Sigmoid colon (tissue), 7 donors: ENCODE measurements at regions of chr15 and their contacts with region 1.

Region 1: GRCh38 chr15:73972984-73973682 is 19.0 kb downstream of the STOML1 start:
- DNase-seq: peak; percentile 92
- H3K4me3 ChIP-seq: peak overlapping the region in 3 of 4 donors; percentile 21 to 32 (median 24)
- H3K27ac ChIP-seq: no peak overlapping the region
- H3K4me1 ChIP-seq: peaks cover 0 to 11% (median 10%) of the 10 kb centered on the region in 4 donors
- H3K27me3 ChIP-seq: no peaks in the 10 kb centered on the region
- CTCF ChIP-seq: peak; percentile 85 to 88 (median 88)
- EP300 ChIP-seq: no peak
- POLR2A ChIP-seq: no peak

Region 2: DNA sequence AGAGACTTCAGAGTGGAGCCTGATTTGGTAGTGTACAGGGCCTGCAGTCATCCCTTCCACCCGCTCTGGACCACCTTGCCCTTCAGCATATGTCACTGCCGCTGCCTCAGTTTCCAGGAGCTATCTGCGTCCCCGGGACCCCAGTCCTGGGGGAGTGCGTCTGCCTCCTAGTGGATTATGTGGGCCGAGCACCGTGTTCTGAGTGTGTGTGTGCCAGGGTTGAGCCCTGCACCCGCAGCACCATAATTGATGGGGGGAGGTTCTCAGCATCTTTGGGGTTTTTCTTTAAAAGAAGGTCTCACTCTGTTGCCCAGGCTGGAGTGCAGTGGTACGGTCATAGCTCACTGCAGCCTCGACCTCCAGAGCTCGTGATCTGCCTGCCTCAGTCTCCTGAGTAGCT is 255.3 kb before region 1 on chr15:
- intact Hi-C with region 1: no loop called
- DNase-seq: no peak
- H3K4me3 ChIP-seq: no peak overlapping the region
- H3K27ac ChIP-seq: no peak overlapping the region
- H3K4me1 ChIP-seq: no peaks in the 10 kb centered on the region
- H3K27me3 ChIP-seq: no peaks in the 10 kb centered on the region
- CTCF ChIP-seq: no peak
- EP300 ChIP-seq: no peak
- POLR2A ChIP-seq: no peak

Region 3: DNA sequence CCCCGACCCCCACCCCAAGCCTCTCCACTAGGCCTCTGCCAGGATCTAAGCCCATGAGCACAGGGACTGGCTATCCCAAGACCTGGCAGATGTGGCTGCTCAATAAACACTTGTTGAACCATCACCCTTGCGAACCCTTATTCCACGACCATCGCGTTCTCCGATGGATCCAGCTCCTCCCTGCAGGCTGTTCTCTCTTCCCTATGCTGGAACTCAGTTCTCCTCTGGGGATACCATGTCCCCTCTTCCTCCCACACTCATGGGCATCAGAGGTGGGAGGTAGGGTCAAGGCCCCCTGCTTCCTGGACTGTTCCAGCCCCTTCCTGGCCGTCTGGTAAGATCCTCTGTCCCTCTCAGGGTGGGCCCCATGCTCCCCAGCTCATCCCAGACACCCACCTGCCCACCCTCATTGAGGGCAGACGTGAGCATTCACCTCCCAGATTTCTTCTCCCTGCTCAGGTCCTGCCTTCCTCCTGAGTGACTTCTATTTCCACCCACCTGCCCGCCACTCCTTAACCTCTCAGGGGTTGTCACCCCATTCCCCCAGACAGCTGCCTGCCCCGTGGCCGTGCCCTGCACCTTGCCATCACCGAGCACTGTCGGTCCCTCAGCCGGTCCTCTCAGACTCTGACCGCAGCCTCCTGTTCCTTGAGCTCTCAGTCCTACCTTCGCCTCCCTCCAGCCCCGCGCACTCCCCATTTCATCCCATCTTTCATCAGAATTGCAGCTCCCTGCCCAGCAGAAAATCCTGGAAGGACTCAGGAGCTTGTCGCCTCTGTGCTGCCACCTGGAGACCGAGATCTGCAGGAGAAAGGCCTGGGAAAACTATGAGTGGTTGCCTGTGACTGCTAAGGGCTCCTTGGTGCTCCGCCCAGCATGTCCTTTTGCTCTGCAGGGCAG is 63.4 kb after region 1 on chr15:
- intact Hi-C with region 1: loop called (anchors 1 kb)
- DNase-seq: peak; percentile 87
- H3K4me3 ChIP-seq: no peak overlapping the region
- H3K27ac ChIP-seq: no peak overlapping the region
- H3K4me1 ChIP-seq: peaks cover 0 to 42% (median 34%) of the 10 kb centered on the region in 4 donors
- H3K27me3 ChIP-seq: no peaks in the 10 kb centered on the region
- CTCF ChIP-seq: peak; percentile 54 to 62 (median 58)
- EP300 ChIP-seq: no peak
- POLR2A ChIP-seq: no peak

Region 4: DNA sequence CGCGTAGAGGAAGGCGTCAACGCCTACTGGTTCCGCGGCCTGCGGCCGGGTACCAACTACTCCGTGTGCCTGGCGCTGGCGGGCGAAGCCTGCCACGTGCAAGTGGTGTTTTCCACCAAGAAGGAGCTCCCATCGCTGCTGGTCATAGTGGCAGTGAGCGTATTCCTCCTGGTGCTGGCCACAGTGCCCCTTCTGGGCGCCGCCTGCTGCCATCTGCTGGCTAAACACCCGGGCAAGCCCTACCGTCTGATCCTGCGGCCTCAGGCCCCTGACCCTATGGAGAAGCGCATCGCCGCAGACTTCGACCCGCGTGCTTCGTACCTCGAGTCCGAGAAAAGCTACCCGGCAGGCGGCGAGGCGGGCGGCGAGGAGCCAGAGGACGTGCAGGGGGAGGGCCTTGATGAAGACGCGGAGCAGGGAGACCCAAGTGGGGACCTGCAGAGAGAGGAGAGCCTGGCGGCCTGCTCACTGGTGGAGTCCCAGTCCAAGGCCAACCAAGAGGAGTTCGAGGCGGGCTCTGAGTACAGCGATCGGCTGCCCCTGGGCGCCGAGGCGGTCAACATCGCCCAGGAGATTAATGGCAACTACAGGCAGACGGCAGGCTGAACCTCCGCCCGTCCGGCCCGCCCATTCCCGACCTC is 161.4 kb after region 1 on chr15:
- intact Hi-C with region 1: loop called (anchors 10 kb)
- DNase-seq: peak; percentile 73
- H3K4me3 ChIP-seq: no peak overlapping the region
- H3K27ac ChIP-seq: no peak overlapping the region
- H3K4me1 ChIP-seq: peaks cover 0 to 64% (median 52%) of the 10 kb centered on the region in 4 donors
- H3K27me3 ChIP-seq: peaks cover 62 to 100% (median 91%) of the 10 kb centered on the region in 3 donors
- CTCF ChIP-seq: peak in 3 of 4 experiments; percentile 11 to 41 (median 35)
- EP300 ChIP-seq: no peak
- POLR2A ChIP-seq: no peak

Region 5: GRCh38 chr15:74322181-74323076 is 349.3 kb after region 1 on chr15:
- intact Hi-C with region 1: loop called (anchors 5 kb)
- DNase-seq: peak; percentile 82
- H3K4me3 ChIP-seq: no peak overlapping the region
- H3K27ac ChIP-seq: no peak overlapping the region
- H3K4me1 ChIP-seq: peaks cover 0 to 23% (median 5%) of the 10 kb centered on the region in 4 donors
- H3K27me3 ChIP-seq: no peaks in the 10 kb centered on the region
- CTCF ChIP-seq: peak; percentile 54 to 77 (median 61)
- EP300 ChIP-seq: no peak
- POLR2A ChIP-seq: no peak

Region 6: DNA sequence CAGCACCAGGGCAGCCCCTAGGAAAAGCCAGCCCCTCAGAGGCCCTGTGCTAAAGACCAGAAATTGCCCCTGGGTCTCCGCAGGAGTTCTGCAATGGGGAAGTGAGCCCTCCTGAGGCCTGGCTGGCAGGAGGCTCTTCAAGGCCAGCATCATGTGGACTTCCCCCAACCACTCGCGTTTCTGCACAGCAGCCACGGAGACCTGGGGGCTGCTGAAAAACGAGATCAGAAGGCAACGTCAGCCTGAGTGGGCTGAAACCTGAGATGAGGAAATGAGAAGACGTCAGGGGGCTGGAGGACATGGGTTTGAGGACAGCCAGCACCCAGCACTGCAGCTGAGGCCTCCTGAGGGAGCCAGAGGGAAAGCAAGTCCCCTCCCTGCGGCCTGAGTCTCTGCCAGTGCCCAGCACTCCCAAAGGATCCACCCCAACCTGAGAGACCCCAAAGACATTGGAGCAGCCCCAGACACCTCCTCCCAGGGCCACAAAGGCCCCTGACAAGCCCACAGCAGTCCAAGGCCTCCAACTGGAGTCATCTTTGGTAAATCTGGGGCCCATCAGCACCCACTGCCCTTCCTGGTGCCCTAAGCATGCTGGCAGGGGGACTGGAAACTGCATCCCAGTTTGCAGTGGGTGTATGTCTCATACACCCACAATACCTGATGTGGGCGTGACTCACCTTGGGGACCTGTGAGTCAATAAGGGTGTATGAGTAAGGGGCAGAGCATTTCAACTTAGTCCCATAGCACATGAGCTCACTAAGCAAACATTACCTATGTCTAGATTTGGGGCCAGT is 423.5 kb after region 1 on chr15:
- intact Hi-C with region 1: no loop called
- DNase-seq: no peak
- H3K4me3 ChIP-seq: no peak overlapping the region
- H3K27ac ChIP-seq: no peak overlapping the region
- H3K4me1 ChIP-seq: no peaks in the 10 kb centered on the region
- H3K27me3 ChIP-seq: peaks cover 0 to 21% (median 0%) of the 10 kb centered on the region in 3 donors
- CTCF ChIP-seq: no peak
- EP300 ChIP-seq: no peak
- POLR2A ChIP-seq: no peak